Common myeloid progenitor, CD34-positive (primary cell): ENCODE measurements at regions of chr16 and their contacts with region 1.

Region 1: DNA sequence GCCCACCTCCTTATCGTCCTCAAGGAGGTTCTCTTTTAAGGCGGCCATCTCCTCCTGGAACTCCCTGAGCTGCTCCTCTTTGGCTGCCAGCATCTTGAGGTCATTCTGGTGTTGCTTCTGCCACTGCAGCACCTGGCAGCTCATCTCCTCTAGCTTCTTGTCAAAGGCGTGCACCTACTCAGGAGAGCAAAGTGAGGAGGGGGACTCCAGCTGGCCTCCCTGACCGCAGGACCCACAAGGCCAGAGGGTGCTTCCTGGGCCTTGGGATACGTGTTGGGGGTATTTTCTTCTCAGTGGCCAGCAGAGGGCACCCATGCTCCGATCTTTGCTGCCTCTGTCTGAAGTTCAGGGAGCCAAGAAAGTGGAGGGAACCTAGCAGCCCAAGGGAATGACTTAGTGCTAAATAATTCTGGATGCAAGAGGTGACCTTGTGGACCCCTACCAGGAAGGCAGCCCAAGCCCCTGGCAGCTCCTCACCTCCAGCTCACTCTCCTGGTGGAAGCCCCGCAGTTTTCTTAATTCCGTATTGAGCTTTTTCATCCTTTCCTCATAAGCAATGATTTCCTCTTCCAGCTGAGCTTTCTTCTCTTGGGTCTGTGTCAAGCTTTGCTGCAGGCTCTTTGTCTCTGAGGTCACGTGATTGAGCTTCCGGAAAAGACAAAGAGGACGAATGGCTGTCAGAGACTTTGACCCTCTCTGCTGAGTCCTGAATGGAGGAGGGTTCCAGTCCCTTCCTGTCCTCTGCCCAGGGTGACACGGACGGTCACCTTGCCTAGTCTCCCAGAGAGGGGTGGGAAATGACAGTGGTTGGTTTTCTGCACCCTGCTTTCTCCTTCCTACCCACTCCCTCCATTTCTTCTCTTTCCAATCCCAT is 31.4 kb downstream of the DHX38 start:
- DNase-seq: peak; percentile 56 to 80 (median 68)
- H3K4me3 ChIP-seq: no peak overlapping the region
- H3K27ac ChIP-seq: no peak overlapping the region
- H3K4me1 ChIP-seq: peaks cover 0 to 15% (median 2%) of the 10 kb centered on the region in 4 experiments
- H3K27me3 ChIP-seq: no peaks in the 10 kb centered on the region

Region 2: DNA sequence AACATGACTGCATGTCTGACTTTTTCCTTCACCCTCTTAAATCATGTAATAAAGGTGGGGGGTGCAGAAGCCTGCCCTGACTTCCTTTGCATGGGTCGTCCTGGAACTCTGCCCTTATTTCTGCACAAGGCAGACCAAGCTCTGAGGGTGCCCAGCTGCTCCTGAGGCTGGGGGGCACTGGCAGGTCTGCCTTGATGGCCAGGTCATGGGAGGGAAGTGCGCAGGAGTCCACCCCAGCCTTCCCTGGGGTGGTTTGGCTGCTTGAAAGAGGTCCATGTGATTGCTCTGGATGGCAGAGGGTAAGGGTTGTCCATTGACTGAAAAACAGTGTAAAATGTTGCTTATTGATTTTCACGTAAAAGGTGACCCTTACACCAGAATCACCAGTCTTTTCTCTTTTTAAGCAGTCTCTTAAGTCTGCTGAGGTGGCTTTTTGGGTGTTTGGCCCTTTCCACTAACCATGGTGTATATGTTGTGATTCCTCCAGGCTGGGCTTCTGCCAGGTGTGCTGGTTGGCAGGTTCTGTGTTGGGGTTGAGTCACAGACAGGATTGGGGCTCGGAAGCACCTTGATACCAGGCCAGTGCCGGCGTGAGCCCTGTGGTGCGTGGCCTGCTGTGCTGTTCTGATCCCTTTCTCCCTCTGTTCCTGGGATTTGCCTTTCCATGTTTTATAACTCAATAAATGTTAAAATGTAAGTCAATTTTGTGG is 11.9 kb before region 1 on chr16:
- CTCF ChIA-PET with region 1: interaction called, 14 read pairs
- POLR2A ChIA-PET with region 1: no interaction called
- DNase-seq: no peak
- H3K4me3 ChIP-seq: no peak overlapping the region
- H3K27ac ChIP-seq: no peak overlapping the region
- H3K4me1 ChIP-seq: no peaks in the 10 kb centered on the region
- H3K27me3 ChIP-seq: no peaks in the 10 kb centered on the region

Region 3: DNA sequence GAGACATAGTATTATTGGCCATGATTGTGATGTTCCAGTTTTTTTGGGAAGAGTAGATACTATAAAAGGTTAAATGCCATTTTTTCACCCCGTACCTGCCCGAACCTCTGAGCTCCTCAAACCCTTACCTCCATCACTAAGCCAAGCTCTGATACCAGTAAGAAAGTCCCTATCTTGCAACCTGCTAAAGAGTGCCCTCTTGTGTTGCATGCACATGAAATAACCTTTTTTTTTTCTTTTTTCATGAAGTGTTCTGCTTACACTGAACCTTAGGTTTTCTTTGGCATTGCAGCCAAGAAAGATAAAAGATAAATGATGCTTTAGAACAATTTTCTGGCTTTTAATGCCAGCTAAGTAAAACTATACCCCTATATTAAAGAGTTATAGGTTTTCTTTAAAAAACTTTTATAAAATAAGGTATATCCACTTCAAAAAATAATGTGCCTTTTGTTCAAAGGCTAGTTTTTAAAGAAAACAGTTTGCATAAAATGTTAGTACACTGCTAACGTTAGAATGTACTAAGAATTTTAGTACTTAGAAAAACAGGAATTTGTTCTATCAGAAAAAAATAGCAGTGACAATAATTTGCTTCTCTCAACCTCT is 342.3 kb after region 1 on chr16:
- CTCF ChIA-PET with region 1: interaction called, 20 read pairs
- POLR2A ChIA-PET with region 1: no interaction called
- DNase-seq: peak; percentile 39 to 72 (median 66)
- H3K4me3 ChIP-seq: no peak overlapping the region
- H3K27ac ChIP-seq: no peak overlapping the region
- H3K4me1 ChIP-seq: no peaks in the 10 kb centered on the region
- H3K27me3 ChIP-seq: no peaks in the 10 kb centered on the region

Region 4: DNA sequence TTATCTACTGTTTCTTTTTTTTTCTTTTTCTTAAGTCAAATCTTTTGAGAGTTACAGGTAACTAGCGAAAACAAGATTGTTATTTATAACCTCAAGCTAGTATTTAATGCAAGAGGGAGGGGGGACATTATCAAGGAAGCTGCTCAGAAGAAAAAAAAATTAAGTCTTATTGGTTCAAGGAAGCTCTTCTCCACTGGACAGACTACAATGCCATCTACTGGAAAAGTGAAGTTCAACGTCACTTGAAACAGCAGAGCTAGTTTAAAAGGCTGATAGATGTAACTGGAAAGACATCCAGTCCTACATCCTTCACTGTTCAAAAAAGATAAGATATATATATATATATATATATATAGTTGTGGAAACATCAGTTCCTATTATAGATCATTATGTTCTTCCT is 1753.6 kb after region 1 on chr16:
- CTCF ChIA-PET with region 1: interaction called, 10 read pairs
- POLR2A ChIA-PET with region 1: no interaction called
- DNase-seq: peak; percentile 53 to 74 (median 69)
- H3K4me3 ChIP-seq: no peak overlapping the region
- H3K27ac ChIP-seq: no peak overlapping the region
- H3K4me1 ChIP-seq: no peaks in the 10 kb centered on the region
- H3K27me3 ChIP-seq: peaks cover 0 to 12% (median 2%) of the 10 kb centered on the region in 5 experiments